B cell (primary cell): ENCODE measurements at regions of chr6 and their contacts with region 1.

Region 1: DNA sequence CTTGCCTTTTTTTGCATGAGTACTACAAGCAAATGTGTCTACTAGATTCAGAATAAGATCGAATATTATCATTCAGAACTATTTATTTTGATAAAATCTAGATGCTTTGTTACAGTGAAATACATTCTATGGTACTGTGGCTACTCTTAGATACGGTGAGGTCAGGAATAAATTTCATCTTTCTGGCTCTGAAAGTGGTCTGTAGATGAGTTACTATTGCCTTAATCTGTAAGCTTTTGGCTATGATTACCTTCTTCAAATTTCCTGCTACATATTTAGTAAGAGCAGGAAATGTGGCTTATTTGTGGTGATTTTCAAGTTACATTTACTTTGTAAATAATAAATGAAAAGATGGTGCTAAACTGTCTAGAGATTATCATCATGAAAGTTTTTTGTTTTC is 50.0 kb downstream of the SCAF8 start:
- DNase-seq: no peak
- ATAC-seq: no peak
- H3K4me3 ChIP-seq: no peak overlapping the region
- H3K4me3 Mint-ChIP-seq: no peak overlapping the region
- H3K27ac ChIP-seq: no peak overlapping the region
- H3K27ac Mint-ChIP-seq: no peak overlapping the region
- H3K4me1 ChIP-seq: no peaks in the 10 kb centered on the region
- H3K4me1 Mint-ChIP-seq: peaks cover 5% of the 10 kb centered on the region
- H3K27me3 ChIP-seq: no peaks in the 10 kb centered on the region
- H3K27me3 Mint-ChIP-seq: no peaks in the 10 kb centered on the region
- CTCF ChIP-seq: no peak

Region 2: DNA sequence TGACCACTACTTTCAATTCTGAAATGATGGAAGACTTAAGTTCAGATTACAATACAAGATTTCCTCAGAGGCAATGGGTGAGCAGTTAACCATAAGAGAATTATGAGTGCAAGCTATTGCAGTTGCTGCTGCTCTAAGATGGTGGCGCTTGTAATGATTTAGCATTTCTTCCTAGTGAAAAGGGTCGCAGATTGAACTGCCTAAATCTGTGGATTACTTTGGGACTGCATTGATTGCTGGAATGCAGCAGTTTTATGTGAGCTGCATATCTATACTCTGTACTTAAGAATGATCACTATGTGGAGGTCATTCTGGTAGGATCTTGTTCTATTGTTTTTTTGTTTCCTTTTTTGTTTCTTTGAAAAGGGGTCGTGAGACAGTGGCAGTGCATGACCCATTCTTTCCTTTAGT is 44.7 kb before region 1 on chr6:
- CTCF ChIA-PET with region 1: no interaction called
- POLR2A ChIA-PET with region 1: no interaction called
- intact Hi-C with region 1: loop called (anchors 5 kb)
- DNase-seq: no peak
- ATAC-seq: no peak
- H3K4me3 ChIP-seq: no peak overlapping the region
- H3K4me3 Mint-ChIP-seq: peak overlapping the region; percentile 39
- H3K27ac ChIP-seq: no peak overlapping the region
- H3K27ac Mint-ChIP-seq: peak overlapping the region; percentile 11
- H3K4me1 ChIP-seq: peaks cover 31 to 52% of the 10 kb centered on the region in 2 donors
- H3K4me1 Mint-ChIP-seq: peaks cover 70% of the 10 kb centered on the region
- H3K27me3 ChIP-seq: no peaks in the 10 kb centered on the region
- H3K27me3 Mint-ChIP-seq: no peaks in the 10 kb centered on the region
- CTCF ChIP-seq: no peak

Region 3: GRCh38 chr6:154824076-154824475 is 40.8 kb after region 1 on chr6:
- CTCF ChIA-PET with region 1: no interaction called
- POLR2A ChIA-PET with region 1: no interaction called
- intact Hi-C with region 1: no loop called
- DNase-seq: no peak
- ATAC-seq: no peak
- H3K4me3 ChIP-seq: no peak overlapping the region
- H3K4me3 Mint-ChIP-seq: no peak overlapping the region
- H3K27ac ChIP-seq: no peak overlapping the region
- H3K27ac Mint-ChIP-seq: no peak overlapping the region
- H3K4me1 ChIP-seq: no peaks in the 10 kb centered on the region
- H3K4me1 Mint-ChIP-seq: peaks cover 2% of the 10 kb centered on the region
- H3K27me3 ChIP-seq: no peaks in the 10 kb centered on the region
- H3K27me3 Mint-ChIP-seq: no peaks in the 10 kb centered on the region
- CTCF ChIP-seq: no peak

Region 4: GRCh38 chr6:155219858-155220301 is 436.7 kb after region 1 on chr6:
- CTCF ChIA-PET with region 1: no interaction called
- POLR2A ChIA-PET with region 1: no interaction called
- intact Hi-C with region 1: no loop called
- DNase-seq: no peak
- ATAC-seq: no peak
- H3K4me3 ChIP-seq: no peak overlapping the region
- H3K4me3 Mint-ChIP-seq: no peak overlapping the region
- H3K27ac ChIP-seq: no peak overlapping the region
- H3K27ac Mint-ChIP-seq: no peak overlapping the region
- H3K4me1 ChIP-seq: no peaks in the 10 kb centered on the region
- H3K4me1 Mint-ChIP-seq: peaks cover 4% of the 10 kb centered on the region
- H3K27me3 ChIP-seq: no peaks in the 10 kb centered on the region
- H3K27me3 Mint-ChIP-seq: peaks cover 2% of the 10 kb centered on the region
- CTCF ChIP-seq: no peak